Naive thymus-derived CD4-positive, alpha-beta T cell (primary cell): ENCODE measurements at regions of chr13 and their contacts with region 1.

Region 1: DNA sequence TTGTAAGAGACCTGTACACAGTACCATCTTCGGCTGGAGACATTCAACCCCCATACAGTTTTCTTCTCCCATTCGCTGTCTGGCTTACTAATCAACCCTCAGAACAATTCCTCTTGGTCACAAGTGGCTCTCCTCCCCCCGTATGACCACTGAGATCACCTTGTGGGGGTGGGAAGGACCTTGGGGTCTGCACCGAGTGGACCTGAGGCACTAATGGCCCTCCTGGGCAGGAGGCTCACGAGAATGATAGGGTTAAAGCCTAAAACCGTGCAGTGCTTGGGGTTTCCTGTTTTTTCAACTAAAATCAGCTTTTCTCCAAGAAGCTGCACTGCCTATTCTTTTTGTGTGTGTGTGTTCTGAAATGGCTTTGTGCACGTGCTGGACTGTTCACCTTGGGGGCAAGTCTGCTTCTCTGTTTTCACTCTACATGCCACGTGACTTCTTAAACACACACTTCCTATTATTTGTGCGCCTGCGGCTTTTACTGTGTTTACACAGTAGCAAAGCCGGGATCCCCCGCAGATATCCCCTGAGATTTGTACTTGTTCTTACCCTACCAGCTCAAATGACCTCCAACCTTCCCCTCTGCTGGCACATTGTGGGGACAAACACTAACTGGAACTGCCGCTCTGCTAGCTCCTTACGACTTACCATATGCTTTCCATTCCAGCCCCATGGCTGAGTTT is 12.3 kb downstream of the RBM26 start:
- DNase-seq: peak in 7 of 9 donors; percentile 61 to 77 (median 68)
- ATAC-seq: peak; percentile 86
- H3K4me3 ChIP-seq: peak overlapping the region; percentile 60
- H3K4me3 Mint-ChIP-seq: peak overlapping the region; percentile 74 to 86 (median 84)
- H3K27ac ChIP-seq: peak overlapping the region; percentile 70
- H3K27ac Mint-ChIP-seq: peak overlapping the region; percentile 67 to 97 (median 91)
- H3K4me1 ChIP-seq: peaks cover 24 to 47% of the 10 kb centered on the region in 2 donors
- H3K4me1 Mint-ChIP-seq: peaks cover 41 to 76% (median 70%) of the 10 kb centered on the region in 7 donors
- H3K27me3 ChIP-seq: no peaks in the 10 kb centered on the region
- H3K27me3 Mint-ChIP-seq: no peaks in the 10 kb centered on the region

Region 2: GRCh38 chr13:78420814-78421213 is 972.9 kb before region 1 on chr13:
- CTCF ChIA-PET with region 1: no interaction called
- POLR2A ChIA-PET with region 1: no interaction called
- intact Hi-C with region 1: no loop called
- DNase-seq: no peak
- ATAC-seq: no peak
- H3K4me3 ChIP-seq: no peak overlapping the region
- H3K4me3 Mint-ChIP-seq: no peak overlapping the region
- H3K27ac ChIP-seq: no peak overlapping the region
- H3K27ac Mint-ChIP-seq: no peak overlapping the region
- H3K4me1 ChIP-seq: no peaks in the 10 kb centered on the region
- H3K4me1 Mint-ChIP-seq: no peaks in the 10 kb centered on the region
- H3K27me3 ChIP-seq: no peaks in the 10 kb centered on the region
- H3K27me3 Mint-ChIP-seq: peaks cover 0 to 11% (median 5%) of the 10 kb centered on the region in 5 donors

Region 3: GRCh38 chr13:78603240-78603957 is 790.3 kb before region 1 on chr13 and contains the start of gene POU4F1:
- CTCF ChIA-PET with region 1: no interaction called
- POLR2A ChIA-PET with region 1: no interaction called
- intact Hi-C with region 1: loop called in 1 of 2 experiments (anchors 5 kb)
- DNase-seq: peak in 4 of 9 donors; percentile 44 to 70 (median 50)
- ATAC-seq: peak; percentile 59
- H3K4me3 ChIP-seq: peak within 1 kb of the TSS; percentile 43
- H3K4me3 Mint-ChIP-seq: peak within 1 kb of the TSS; percentile 76 to 95 (median 85)
- H3K27ac ChIP-seq: no peak within 1 kb of the TSS
- H3K27ac Mint-ChIP-seq: peak within 1 kb of the TSS in 6 of 9 donors; percentile 7 to 89 (median 68)
- H3K4me1 ChIP-seq: peaks cover 4 to 31% of the 10 kb centered on the region in 2 donors
- H3K4me1 Mint-ChIP-seq: peaks cover 35 to 70% (median 56%) of the 10 kb centered on the region in 7 donors
- H3K27me3 ChIP-seq: peaks cover 44 to 74% of the 10 kb centered on the region in 2 donors
- H3K27me3 Mint-ChIP-seq: peaks cover 82 to 91% (median 88%) of the 10 kb centered on the region in 5 donors
- total RNA-seq, gene POU4F1: 0.08 to 0.22 (median 0.15) TPM in 3 of 5 experiments, not detected in the others

Region 4: GRCh38 chr13:78978381-78978998 is 415.2 kb before region 1 on chr13:
- CTCF ChIA-PET with region 1: interaction called, 3 read pairs
- POLR2A ChIA-PET with region 1: interaction called, 3 read pairs
- intact Hi-C with region 1: loop called in 1 of 2 experiments (anchors 1 kb)
- DNase-seq: peak in 6 of 9 donors; percentile 15 to 51 (median 40)
- ATAC-seq: peak; percentile 84
- H3K4me3 ChIP-seq: no peak overlapping the region
- H3K4me3 Mint-ChIP-seq: no peak overlapping the region
- H3K27ac ChIP-seq: no peak overlapping the region
- H3K27ac Mint-ChIP-seq: no peak overlapping the region
- H3K4me1 ChIP-seq: no peaks in the 10 kb centered on the region
- H3K4me1 Mint-ChIP-seq: no peaks in the 10 kb centered on the region
- H3K27me3 ChIP-seq: no peaks in the 10 kb centered on the region
- H3K27me3 Mint-ChIP-seq: peaks cover 9 to 37% (median 14%) of the 10 kb centered on the region in 5 donors

Region 5: DNA sequence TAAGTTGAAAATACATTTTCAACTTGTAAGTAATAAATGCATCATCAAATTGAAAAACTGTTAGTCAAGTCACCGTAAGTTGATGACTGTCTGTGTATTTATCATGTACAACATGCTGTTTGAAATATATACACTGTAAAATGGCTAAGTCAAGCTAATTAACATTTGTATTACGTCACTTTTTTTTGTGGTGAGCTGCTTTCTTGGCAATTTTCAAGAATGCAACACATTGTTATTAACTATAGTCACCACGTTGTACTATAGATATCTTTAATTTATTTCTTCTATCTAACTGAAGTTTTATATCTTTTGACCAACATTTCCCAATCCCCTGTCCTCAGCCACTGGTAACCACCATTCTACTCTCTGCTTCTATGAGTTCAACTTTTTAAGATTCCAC is 44.7 kb before region 1 on chr13:
- CTCF ChIA-PET with region 1: interaction called, 3 read pairs
- POLR2A ChIA-PET with region 1: no interaction called
- intact Hi-C with region 1: loop called in 1 of 2 experiments (anchors 2 kb)
- DNase-seq: no peak
- ATAC-seq: no peak
- H3K4me3 ChIP-seq: no peak overlapping the region
- H3K4me3 Mint-ChIP-seq: no peak overlapping the region
- H3K27ac ChIP-seq: no peak overlapping the region
- H3K27ac Mint-ChIP-seq: no peak overlapping the region
- H3K4me1 ChIP-seq: no peaks in the 10 kb centered on the region
- H3K4me1 Mint-ChIP-seq: peaks cover 0 to 17% (median 15%) of the 10 kb centered on the region in 7 donors
- H3K27me3 ChIP-seq: no peaks in the 10 kb centered on the region
- H3K27me3 Mint-ChIP-seq: no peaks in the 10 kb centered on the region

Region 6: DNA sequence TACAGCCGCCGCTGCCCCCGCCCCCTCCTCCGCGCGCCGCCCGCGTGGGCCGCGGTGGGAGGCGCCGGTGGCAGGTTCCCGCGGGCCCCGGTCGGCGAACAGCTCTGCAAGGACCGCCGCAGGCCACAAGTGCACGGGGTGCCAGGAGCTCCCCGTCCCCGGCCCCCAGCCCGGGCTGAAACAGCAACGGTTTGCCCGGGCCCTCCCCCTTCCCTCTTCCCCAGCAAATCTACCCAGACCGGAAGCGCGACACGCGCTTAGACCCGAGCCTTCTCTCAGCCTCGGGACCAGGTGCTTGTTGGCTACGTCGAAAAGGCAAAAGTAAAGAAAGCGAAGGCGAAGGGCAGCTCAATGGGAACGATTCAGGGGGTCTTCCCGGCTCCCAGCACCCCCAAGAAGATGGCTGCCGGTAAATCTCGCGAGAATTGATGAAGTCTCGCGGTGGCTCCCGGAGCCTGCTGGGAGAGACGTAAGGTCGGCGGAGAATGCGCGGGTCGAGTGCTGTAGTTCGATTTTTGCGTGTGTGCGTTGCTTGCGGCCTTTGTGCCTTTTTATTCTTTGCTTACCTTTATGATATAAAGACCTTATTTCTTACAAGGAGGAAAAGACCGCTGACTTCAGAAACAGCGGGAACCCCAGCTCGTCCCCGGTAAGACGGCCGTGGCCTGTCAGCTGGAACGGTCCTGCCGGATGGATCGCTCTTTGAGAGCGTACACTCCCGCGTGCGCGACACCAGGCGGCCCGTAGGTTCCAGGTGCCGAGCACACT is 12.3 kb after region 1 on chr13 and contains the start of gene RBM26:
- CTCF ChIA-PET with region 1: interaction called, 34 read pairs
- POLR2A ChIA-PET with region 1: interaction called, 82 read pairs
- intact Hi-C with region 1: loop called (anchors 1 kb)
- DNase-seq: peak; percentile 87 to 96 (median 93)
- ATAC-seq: peak; percentile 92
- H3K4me3 ChIP-seq: peak within 1 kb of the TSS; percentile 93
- H3K4me3 Mint-ChIP-seq: peak within 1 kb of the TSS in 5 of 10 donors; percentile 93 to 97 (median 95)
- H3K27ac ChIP-seq: peak within 1 kb of the TSS; percentile 91
- H3K27ac Mint-ChIP-seq: peak within 1 kb of the TSS in 5 of 9 donors; percentile 97 to 99 (median 99)
- H3K4me1 ChIP-seq: peaks cover 33 to 44% of the 10 kb centered on the region in 2 donors
- H3K4me1 Mint-ChIP-seq: peaks cover 31 to 49% (median 36%) of the 10 kb centered on the region in 7 donors
- H3K27me3 ChIP-seq: no peaks in the 10 kb centered on the region
- H3K27me3 Mint-ChIP-seq: no peaks in the 10 kb centered on the region
- total RNA-seq, gene RBM26: 75.4 to 136 (median 85.2) TPM

Region 7: DNA sequence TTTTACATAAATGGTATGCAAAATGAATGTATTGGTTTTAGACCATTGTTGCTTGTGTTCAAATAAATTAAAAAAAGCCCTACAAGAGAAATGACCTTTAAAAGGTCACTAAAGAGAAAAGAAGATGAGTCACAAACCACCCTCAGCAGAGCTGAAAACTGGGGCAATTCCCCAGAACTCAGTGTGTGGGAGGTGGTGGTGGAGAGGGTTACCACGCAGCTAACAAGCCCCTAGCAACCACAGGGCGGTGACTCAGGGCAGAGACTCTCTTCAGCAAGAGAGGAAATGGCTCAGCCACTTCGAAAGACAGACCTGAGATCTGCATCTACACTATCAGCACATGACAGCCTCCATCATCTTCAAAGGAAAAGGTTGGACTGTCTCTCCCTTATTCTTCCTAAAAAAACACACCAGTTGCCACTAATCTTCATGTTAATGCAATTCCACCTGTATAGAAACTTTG is 57.8 kb after region 1 on chr13:
- CTCF ChIA-PET with region 1: no interaction called
- POLR2A ChIA-PET with region 1: interaction called, 3 read pairs
- intact Hi-C with region 1: loop called in 1 of 2 experiments (anchors 1 kb)
- DNase-seq: peak; percentile 17 to 90 (median 51)
- ATAC-seq: peak; percentile 99
- H3K4me3 ChIP-seq: no peak overlapping the region
- H3K4me3 Mint-ChIP-seq: peak overlapping the region in 8 of 10 donors; percentile 10 to 84 (median 32)
- H3K27ac ChIP-seq: no peak overlapping the region
- H3K27ac Mint-ChIP-seq: peak overlapping the region; percentile 1 to 92 (median 43)
- H3K4me1 ChIP-seq: peaks cover 19 to 28% of the 10 kb centered on the region in 2 donors
- H3K4me1 Mint-ChIP-seq: peaks cover 24 to 64% (median 46%) of the 10 kb centered on the region in 7 donors
- H3K27me3 ChIP-seq: no peaks in the 10 kb centered on the region
- H3K27me3 Mint-ChIP-seq: no peaks in the 10 kb centered on the region

Region 8: GRCh38 chr13:79547211-79548195 is 153.8 kb after region 1 on chr13:
- CTCF ChIA-PET with region 1: no interaction called
- POLR2A ChIA-PET with region 1: no interaction called
- intact Hi-C with region 1: no loop called
- DNase-seq: no peak
- ATAC-seq: no peak
- H3K4me3 ChIP-seq: no peak overlapping the region
- H3K4me3 Mint-ChIP-seq: no peak overlapping the region
- H3K27ac ChIP-seq: no peak overlapping the region
- H3K27ac Mint-ChIP-seq: no peak overlapping the region
- H3K4me1 ChIP-seq: no peaks in the 10 kb centered on the region
- H3K4me1 Mint-ChIP-seq: no peaks in the 10 kb centered on the region
- H3K27me3 ChIP-seq: no peaks in the 10 kb centered on the region
- H3K27me3 Mint-ChIP-seq: no peaks in the 10 kb centered on the region